ENCODE measurements at regions of chr16 and their contacts with region 1.

Region 1: GRCh38 chr16:87387942-87388817 is 4.0 kb upstream of the MAP1LC3B start:
- DNase-seq: peak; percentile 95 to 100
- ATAC-seq: peak; percentile 70 to 83
- H3K4me3 ChIP-seq: 0 out of 3 replicates have a peak overlapping the region, but pooled peaks have one; percentile 20
- H3K27ac ChIP-seq: peak overlapping the region; percentile 80 to 98
- H3K4me1 ChIP-seq: peaks cover 40% of the 10 kb centered on the region
- CTCF ChIP-seq: no peak
- EP300 ChIP-seq: peak; percentile 44 to 51; a peak in 2 of 5 replicates
- POLR2A ChIP-seq: no peak
- RAD21 ChIP-seq: no peak

Region 2: DNA sequence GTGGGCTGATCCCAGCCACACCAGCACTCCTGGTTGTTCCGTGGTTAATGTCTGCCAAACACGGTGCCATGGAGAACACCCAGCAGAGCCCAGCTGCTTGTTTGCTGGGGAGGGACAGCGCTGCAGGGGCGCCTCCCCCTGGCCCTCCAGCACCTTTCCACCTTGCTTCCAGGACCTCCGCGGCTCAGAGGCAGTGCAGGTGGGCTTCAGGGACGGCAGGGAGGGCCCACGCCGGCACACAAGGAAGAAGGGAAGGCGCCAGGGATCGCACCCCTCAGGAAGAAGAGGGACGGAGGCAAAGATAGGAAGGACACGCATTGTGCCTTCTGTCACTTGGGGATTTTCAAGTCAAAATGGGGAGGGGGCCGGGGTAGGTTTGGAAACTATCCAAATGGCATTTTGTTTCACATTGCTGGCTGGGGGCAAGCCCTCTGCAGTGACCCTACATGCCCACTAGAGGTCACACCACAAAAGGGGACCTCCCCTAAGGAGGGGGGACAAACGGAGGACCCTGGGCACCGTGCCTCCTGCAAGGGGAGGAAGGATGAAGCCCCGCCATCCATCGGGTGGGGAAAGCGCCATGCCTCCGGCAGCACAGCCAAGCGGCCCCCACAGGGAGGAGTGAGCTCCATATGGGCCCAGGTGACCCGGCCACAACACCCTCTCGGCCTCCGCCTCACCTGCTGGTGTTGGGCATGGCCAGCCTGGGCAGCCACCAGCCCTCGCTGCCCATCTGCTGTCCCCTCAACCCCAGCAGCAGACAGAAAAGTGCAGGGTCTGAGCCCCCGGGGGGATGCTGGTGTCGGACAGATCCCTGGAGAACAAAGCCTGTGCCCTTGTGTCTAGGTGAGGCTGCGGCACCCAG is 63.5 kb before region 1 on chr16:
- CTCF ChIA-PET with region 1: interaction called, 10 read pairs
- POLR2A ChIA-PET with region 1: interaction called, 6 read pairs
- DNase-seq: peak; percentile 19 to 77
- ATAC-seq: peak; percentile 45 to 82; a peak in 3 of 6 replicates
- H3K4me3 ChIP-seq: no peak overlapping the region
- H3K27ac ChIP-seq: peak overlapping the region in 1 of 2 experiments; percentile 13; a peak in 1 of 6 replicates
- H3K4me1 ChIP-seq: peaks cover 7% of the 10 kb centered on the region; the same call in 2 of the 3 replicates
- CTCF ChIP-seq: peak; percentile 67
- EP300 ChIP-seq: no peak
- POLR2A ChIP-seq: no peak
- RAD21 ChIP-seq: peak; percentile 49 to 51; a peak in 3 of 5 replicates

Region 3: GRCh38 chr16:87374313-87374712 is 13.9 kb before region 1 on chr16:
- CTCF ChIA-PET with region 1: interaction called, 11 read pairs
- POLR2A ChIA-PET with region 1: interaction called, 6 read pairs
- DNase-seq: no peak
- ATAC-seq: no peak
- H3K4me3 ChIP-seq: no peak overlapping the region
- H3K27ac ChIP-seq: no peak overlapping the region
- H3K4me1 ChIP-seq: peaks cover 16% of the 10 kb centered on the region
- CTCF ChIP-seq: no peak
- EP300 ChIP-seq: no peak
- POLR2A ChIP-seq: no peak
- RAD21 ChIP-seq: no peak

Measured in A549 (cell line).